AG04450 (cell line): ENCODE measurements at regions of chr5 and their contacts with region 1.

Region 1: DNA sequence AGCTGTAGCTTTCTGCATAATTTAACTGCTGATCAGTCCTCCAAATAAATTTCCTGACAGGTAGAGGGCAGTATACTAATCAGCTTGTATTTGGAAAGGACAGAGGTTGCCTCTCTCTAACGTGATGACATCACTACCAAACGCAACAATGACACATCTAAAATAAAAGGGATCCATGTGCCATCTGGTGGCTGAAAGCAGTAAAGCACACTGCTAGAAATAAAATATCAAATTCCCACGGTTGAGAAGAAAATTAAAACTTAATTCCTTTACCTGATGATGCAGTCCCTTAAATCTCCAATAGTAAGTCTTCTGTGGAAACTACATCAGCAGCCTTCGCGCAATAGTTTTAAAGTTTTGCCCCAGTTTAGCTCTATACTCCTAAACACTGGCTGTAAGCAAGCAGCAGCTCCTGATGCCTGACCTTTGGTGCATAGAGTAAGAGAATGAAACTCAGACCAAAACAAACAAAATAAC is 54.5 kb downstream of the DIAPH1 start:
- DNase-seq: peak; percentile 90
- H3K4me3 ChIP-seq: no peak overlapping the region
- H3K27ac ChIP-seq: peak overlapping the region; percentile 23
- H3K27me3 ChIP-seq: no peaks in the 10 kb centered on the region
- CTCF ChIP-seq: peak; percentile 78

Region 2: GRCh38 chr5:141208478-141208877 is 355.8 kb before region 1 on chr5 and contains the start of gene PCDHB12:
- CTCF ChIA-PET with region 1: interaction called, 10 read pairs
- POLR2A ChIA-PET with region 1: no interaction called
- DNase-seq: no peak
- H3K4me3 ChIP-seq: no peak within 1 kb of the TSS
- H3K27ac ChIP-seq: no peak within 1 kb of the TSS
- H3K27me3 ChIP-seq: no peaks in the 10 kb centered on the region
- CTCF ChIP-seq: no peak
- polyA plus RNA-seq, gene PCDHB12: 0.32 and 0.40 TPM in 2 replicates

Region 3: GRCh38 chr5:141338538-141339306 is 225.5 kb before region 1 on chr5 and contains the start of gene PCDHGA2:
- CTCF ChIA-PET with region 1: interaction called, 57 read pairs
- POLR2A ChIA-PET with region 1: no interaction called
- DNase-seq: no peak
- H3K4me3 ChIP-seq: peak within 1 kb of the TSS; percentile 51
- H3K27ac ChIP-seq: no peak within 1 kb of the TSS
- H3K27me3 ChIP-seq: peaks cover 6% of the 10 kb centered on the region
- CTCF ChIP-seq: peak; percentile 57
- polyA plus RNA-seq, gene PCDHGA2: 6.1 and 6.3 TPM in 2 replicates

Region 4: DNA sequence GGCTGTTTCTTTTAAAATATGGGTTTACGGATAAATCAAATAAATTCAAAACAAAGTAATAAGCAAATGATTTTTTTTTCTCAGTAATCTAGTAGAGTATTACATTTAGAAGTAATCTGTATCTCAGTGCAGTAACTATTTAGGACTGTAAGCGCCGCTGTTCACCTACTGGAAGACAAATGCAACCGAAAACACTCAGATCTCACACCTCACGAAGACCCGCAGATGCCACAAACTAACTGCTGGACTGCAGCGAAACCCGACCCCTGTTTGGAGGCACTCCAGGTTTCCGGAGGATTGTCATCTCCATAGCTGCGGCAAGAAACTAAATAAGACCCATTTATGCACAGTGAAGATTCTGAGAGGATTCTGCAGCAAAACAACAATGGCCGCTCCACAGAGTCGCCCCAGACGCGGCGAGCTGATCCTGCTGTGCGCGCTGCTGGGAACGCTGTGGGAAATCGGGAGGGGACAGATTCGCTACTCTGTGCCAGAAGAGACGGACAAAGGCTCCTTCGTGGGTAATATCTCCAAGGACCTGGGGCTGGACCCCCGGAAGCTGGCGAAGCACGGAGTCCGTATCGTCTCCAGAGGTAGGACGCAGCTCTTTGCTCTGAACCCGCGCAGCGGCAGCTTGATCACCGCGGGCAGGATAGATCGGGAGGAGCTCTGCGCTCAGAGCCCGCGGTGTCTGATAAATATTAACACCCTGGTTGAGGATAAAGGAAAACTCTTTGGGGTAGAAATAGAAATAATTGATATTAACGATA is 171.6 kb before region 1 on chr5 and contains the start of gene PCDHGA8:
- CTCF ChIA-PET with region 1: interaction called, 40 read pairs
- POLR2A ChIA-PET with region 1: no interaction called
- DNase-seq: no peak
- H3K4me3 ChIP-seq: 0 out of 2 replicates have a peak within 1 kb of the TSS, but pooled peaks have one; percentile 17
- H3K27ac ChIP-seq: no peak within 1 kb of the TSS
- H3K27me3 ChIP-seq: no peaks in the 10 kb centered on the region
- CTCF ChIP-seq: peak; percentile 23; the same call in 1 of the 2 replicates
- polyA plus RNA-seq, gene PCDHGA8: 0.93 and 1.1 TPM in 2 replicates

Region 5: GRCh38 chr5:141437221-141437620 is 127.0 kb before region 1 on chr5:
- CTCF ChIA-PET with region 1: interaction called, 94 read pairs
- POLR2A ChIA-PET with region 1: no interaction called
- DNase-seq: no peak
- H3K4me3 ChIP-seq: no peak overlapping the region
- H3K27ac ChIP-seq: no peak overlapping the region
- H3K27me3 ChIP-seq: no peaks in the 10 kb centered on the region
- CTCF ChIP-seq: no peak

Region 6: GRCh38 chr5:141590127-141590526 is 25.9 kb after region 1 on chr5:
- CTCF ChIA-PET with region 1: interaction called, 23 read pairs
- POLR2A ChIA-PET with region 1: interaction called, 4 read pairs
- DNase-seq: no peak
- H3K4me3 ChIP-seq: no peak overlapping the region
- H3K27ac ChIP-seq: no peak overlapping the region
- H3K27me3 ChIP-seq: no peaks in the 10 kb centered on the region
- CTCF ChIP-seq: no peak